GM12878 (cell line): ENCODE measurements at regions of chr11 and their contacts with region 1.

Region 1: DNA sequence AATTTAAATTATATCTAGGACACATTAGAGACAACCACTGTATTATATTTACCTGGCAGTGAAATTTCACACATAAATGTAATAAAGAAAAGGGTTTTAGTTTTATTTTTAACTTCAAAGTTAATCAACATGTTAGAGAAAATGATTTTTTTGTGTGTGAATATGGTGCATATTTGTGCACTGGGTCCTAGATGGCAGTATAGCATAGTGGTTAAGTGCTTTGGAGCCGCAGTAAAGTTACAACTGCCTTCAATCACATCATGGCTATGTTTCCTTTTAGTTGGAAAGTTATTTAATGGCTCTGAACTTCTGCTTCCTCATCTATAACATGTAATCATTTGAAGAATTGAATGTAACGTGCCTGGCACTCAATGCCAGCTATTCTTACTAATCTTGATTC is 108.9 kb upstream of the DDI1 start:
- DNase-seq: no peak
- ATAC-seq: peak; percentile 39; the same call in 2 of the 3 replicates
- H3K4me3 ChIP-seq: no peak overlapping the region
- H3K27ac ChIP-seq: no peak overlapping the region
- H3K4me1 ChIP-seq: peaks cover 23% of the 10 kb centered on the region
- H3K27me3 ChIP-seq: no peaks in the 10 kb centered on the region
- CTCF ChIP-seq: peak; percentile 57 to 75 (median 71)
- EP300 ChIP-seq: no peak
- POLR2A ChIP-seq: no peak
- RAD21 ChIP-seq: peak; percentile 82

Region 2: DNA sequence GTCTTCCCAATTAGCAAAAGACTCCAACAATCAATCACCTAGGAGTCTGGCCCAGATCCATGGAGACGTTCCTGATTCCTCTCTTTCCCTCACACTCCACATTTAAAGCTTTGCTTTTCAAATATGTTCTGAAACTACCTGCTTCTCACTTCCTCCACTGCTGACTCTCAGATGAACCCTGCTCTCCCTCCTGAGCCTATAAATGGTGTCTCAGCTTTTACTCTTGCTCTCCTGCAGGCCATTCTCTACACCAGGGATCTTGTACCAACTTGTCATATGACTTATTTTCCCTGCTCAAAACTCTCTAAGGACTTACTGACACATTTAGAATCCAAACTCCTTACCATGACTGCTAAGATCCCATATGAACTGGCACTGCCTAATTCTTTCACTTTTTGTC is 29.5 kb before region 1 on chr11:
- CTCF ChIA-PET with region 1: interaction called, 6 read pairs
- POLR2A ChIA-PET with region 1: no interaction called
- RAD21 ChIA-PET with region 1: interaction called, 4 read pairs
- SMC1A ChIA-PET with region 1: interaction called, 5 read pairs
- in situ Hi-C with region 1: no loop called
- intact Hi-C with region 1: loop called (anchors 2 kb)
- DNase-seq: peak; percentile 40
- ATAC-seq: peak; percentile 86
- H3K4me3 ChIP-seq: peak overlapping the region; percentile 66; the same call in 1 of the 2 replicates
- H3K27ac ChIP-seq: peak overlapping the region; percentile 73
- H3K4me1 ChIP-seq: peaks cover 37% of the 10 kb centered on the region
- H3K27me3 ChIP-seq: no peaks in the 10 kb centered on the region
- CTCF ChIP-seq: no peak
- EP300 ChIP-seq: peak in 1 of 2 experiments; percentile 59; a peak in 2 of 4 replicates
- POLR2A ChIP-seq: no peak
- RAD21 ChIP-seq: no peak

Region 3: DNA sequence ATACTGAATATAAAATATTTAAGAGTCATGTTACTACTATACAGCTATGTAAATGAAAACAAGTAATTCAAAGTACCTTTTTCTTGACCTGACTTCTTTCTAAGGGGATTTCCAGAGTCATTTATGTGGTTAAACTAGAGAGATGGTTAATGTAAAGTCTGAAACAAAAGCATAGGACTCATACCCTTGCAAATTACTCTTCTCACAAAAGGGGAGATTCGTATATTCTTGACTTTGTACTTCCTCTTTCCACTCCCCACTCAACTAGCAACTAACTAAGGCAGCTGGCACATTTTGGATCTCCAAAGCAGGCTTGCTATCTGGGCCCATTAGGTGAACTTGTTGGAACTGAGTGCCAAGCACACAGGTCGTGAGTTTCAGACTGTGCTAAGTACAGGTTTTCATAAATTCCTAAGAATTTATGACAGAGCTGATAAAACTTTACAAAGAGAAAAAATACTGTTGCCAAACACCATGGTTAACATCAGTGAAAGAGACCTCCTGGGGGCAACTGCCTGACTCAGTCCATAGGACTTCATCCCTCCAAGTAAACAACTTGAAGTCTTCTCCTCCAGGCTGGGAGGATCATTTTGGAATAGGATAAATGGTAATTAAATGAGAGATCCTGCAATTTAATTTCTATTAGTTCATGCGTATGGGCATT is 31.9 kb after region 1 on chr11:
- CTCF ChIA-PET with region 1: interaction called, 9 read pairs
- POLR2A ChIA-PET with region 1: interaction called, 3 read pairs
- RAD21 ChIA-PET with region 1: interaction called, 27 read pairs
- SMC1A ChIA-PET with region 1: interaction called, 28 read pairs
- in situ Hi-C with region 1: no loop called
- intact Hi-C with region 1: loop called (anchors 1 kb)
- DNase-seq: peak; percentile 83
- ATAC-seq: peak; percentile 99
- H3K4me3 ChIP-seq: no peak overlapping the region
- H3K27ac ChIP-seq: peak overlapping the region; percentile 53
- H3K4me1 ChIP-seq: peaks cover 11% of the 10 kb centered on the region; the same call in 1 of the 2 replicates
- H3K27me3 ChIP-seq: no peaks in the 10 kb centered on the region
- CTCF ChIP-seq: no peak
- EP300 ChIP-seq: peak in 1 of 2 experiments; percentile 82; a peak in 1 of 4 replicates
- POLR2A ChIP-seq: no peak
- RAD21 ChIP-seq: no peak

Region 4: GRCh38 chr11:104159356-104159755 is 231.8 kb after region 1 on chr11:
- CTCF ChIA-PET with region 1: no interaction called
- POLR2A ChIA-PET with region 1: no interaction called
- RAD21 ChIA-PET with region 1: interaction called, 3 read pairs
- SMC1A ChIA-PET with region 1: interaction called, 3 read pairs
- in situ Hi-C with region 1: loop called (anchors 5 kb)
- intact Hi-C with region 1: no loop called
- DNase-seq: no peak
- ATAC-seq: peak; percentile 18; the same call in 2 of the 3 replicates
- H3K4me3 ChIP-seq: no peak overlapping the region
- H3K27ac ChIP-seq: no peak overlapping the region
- H3K4me1 ChIP-seq: no peaks in the 10 kb centered on the region
- H3K27me3 ChIP-seq: peaks cover 2 to 4% of the 10 kb centered on the region in 2 experiments; a peak in 3 of 4 replicates
- CTCF ChIP-seq: no peak
- EP300 ChIP-seq: no peak
- POLR2A ChIP-seq: no peak
- RAD21 ChIP-seq: no peak

Region 5: DNA sequence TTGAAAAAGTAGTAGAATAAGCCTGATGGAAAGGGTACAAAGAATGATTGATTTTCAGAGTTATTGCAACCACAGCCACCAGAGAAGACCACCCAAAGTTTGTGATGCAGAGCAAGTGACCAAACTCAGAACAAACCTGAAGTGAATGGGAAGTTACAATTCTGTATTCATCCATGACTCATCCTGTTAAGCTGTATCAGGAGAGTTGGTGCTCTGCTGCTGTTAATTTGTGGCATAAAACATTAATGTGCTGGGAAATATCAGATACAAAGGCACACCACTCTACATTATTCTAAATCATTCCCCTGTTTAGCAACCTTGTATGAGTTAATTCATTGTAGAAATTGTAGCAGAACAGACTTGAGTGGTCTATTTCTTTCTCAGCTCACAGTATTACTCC is 256.1 kb after region 1 on chr11:
- CTCF ChIA-PET with region 1: no interaction called
- POLR2A ChIA-PET with region 1: no interaction called
- RAD21 ChIA-PET with region 1: no interaction called
- SMC1A ChIA-PET with region 1: no interaction called
- in situ Hi-C with region 1: no loop called
- intact Hi-C with region 1: no loop called
- DNase-seq: no peak
- ATAC-seq: no peak
- H3K4me3 ChIP-seq: no peak overlapping the region
- H3K27ac ChIP-seq: no peak overlapping the region
- H3K4me1 ChIP-seq: no peaks in the 10 kb centered on the region
- H3K27me3 ChIP-seq: no peaks in the 10 kb centered on the region
- CTCF ChIP-seq: no peak
- EP300 ChIP-seq: no peak
- POLR2A ChIP-seq: no peak
- RAD21 ChIP-seq: no peak

Region 6: GRCh38 chr11:104333977-104334376 is 406.4 kb after region 1 on chr11:
- CTCF ChIA-PET with region 1: interaction called, 4 read pairs
- POLR2A ChIA-PET with region 1: no interaction called
- RAD21 ChIA-PET with region 1: interaction called, 3 read pairs
- SMC1A ChIA-PET with region 1: interaction called, 3 read pairs
- in situ Hi-C with region 1: no loop called
- intact Hi-C with region 1: loop called (anchors 5 kb)
- DNase-seq: no peak
- ATAC-seq: peak; percentile 65
- H3K4me3 ChIP-seq: no peak overlapping the region
- H3K27ac ChIP-seq: no peak overlapping the region
- H3K4me1 ChIP-seq: no peaks in the 10 kb centered on the region
- H3K27me3 ChIP-seq: no peaks in the 10 kb centered on the region
- CTCF ChIP-seq: peak; percentile 27 to 47 (median 44)
- EP300 ChIP-seq: no peak
- POLR2A ChIP-seq: no peak
- RAD21 ChIP-seq: peak; percentile 22; the same call in 1 of the 2 replicates